ENCODE measurements at regions of chrX and their contacts with region 1.

Region 1: DNA sequence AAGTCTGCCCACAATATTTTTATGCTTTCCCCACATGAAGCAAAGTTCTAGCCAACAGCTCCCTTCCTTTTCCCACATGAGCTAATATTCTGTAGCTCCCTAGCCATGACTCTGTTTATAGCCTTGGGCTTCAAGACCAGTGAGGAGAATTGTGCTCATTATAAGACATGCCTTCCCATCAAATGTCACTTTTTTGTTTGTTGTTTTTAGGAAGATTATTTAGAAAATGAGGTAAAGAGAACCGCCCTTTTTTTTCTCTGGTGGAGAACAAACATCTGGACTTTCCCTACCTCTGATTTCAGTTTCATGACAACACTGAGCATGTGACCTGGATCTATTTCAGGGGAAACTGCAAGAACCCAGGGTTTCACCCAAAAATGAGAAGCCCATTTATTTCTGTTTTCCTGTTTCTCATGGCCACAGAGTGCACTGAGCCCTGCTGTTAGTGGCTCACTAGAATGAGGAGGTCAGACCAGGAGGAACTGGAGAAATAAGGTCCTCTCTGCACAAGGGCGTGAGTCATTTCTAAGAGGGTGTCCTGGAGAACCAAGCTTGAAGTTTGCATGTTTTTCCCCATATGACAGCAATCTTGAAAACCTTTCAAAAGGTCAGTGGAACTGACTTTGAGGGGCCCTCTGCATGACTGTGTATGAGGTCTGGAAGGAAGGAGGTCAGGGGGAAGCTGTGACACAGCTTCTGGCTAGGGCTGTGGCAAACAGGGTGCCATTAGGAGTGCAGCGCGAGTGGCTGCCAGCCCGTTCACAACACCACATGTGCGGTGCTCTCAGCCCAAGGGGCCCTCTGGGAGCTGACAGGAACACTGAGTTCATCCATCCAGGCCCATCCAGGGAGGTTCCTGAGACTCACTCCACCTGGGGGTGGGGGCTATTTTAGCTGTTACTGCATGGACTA is 55.2 kb downstream of the CHST7 start:
- DNase-seq: peak; percentile 49 to 77
- ATAC-seq: peak; percentile 57 to 64
- H3K4me3 ChIP-seq: no peak overlapping the region
- H3K27ac ChIP-seq: peak overlapping the region; percentile 23 to 62 (median 52)
- H3K4me1 ChIP-seq: peaks cover 0 to 22% of the 10 kb centered on the region in 2 donors
- H3K27me3 ChIP-seq: no peaks in the 10 kb centered on the region
- CTCF ChIP-seq: no peak
- POLR2A ChIP-seq: no peak

Region 2: GRCh38 chrX:46588263-46588662 is 40.5 kb before region 1 on chrX:
- in situ Hi-C with region 1: no loop called
- intact Hi-C with region 1: loop called (anchors 5 kb)
- DNase-seq: peak; percentile 31 to 64
- ATAC-seq: peak; percentile 52 to 70
- H3K4me3 ChIP-seq: no peak overlapping the region
- H3K27ac ChIP-seq: peak overlapping the region; percentile 18 to 63 (median 42)
- H3K4me1 ChIP-seq: peaks cover 6 to 24% of the 10 kb centered on the region in 2 donors
- H3K27me3 ChIP-seq: no peaks in the 10 kb centered on the region
- CTCF ChIP-seq: no peak
- POLR2A ChIP-seq: no peak

Measured in gastrocnemius medialis (tissue), 4 donors.